A673 (cell line): ENCODE measurements at regions of chr11 and their contacts with region 1.

Region 1: DNA sequence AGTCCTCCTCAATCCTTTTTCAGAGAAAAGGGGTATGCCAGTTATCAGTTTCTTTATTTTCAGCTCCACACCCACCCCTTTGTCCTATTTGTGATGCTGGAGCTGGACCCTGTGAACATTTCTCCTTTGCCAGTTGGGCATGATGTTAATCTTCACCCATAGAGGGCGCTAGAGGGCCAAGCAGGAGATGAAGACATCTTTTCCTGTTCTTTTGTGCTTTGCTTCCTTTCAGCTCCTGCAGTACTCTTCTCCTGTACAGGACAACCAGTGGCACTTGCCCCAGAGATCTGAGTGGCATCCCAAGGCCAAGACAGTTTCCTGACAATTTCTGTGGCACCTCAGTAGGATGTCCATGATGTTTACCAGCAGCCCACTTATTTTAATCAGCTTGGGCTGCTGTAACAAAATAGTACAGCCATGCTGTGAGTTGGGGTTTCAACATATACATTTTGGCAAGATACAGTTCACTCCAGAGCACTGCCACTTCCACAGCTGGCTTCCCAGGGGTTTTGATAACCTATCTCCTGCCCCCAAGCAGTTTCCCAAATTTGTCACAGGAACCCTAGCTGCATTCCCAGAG is 4.6 kb downstream of the SAA2 start:
- DNase-seq: peak; percentile 75
- H3K4me3 ChIP-seq: no peak overlapping the region
- H3K27ac ChIP-seq: no peak overlapping the region
- H3K4me1 ChIP-seq: no peaks in the 10 kb centered on the region
- H3K27me3 ChIP-seq: peaks cover 8% of the 10 kb centered on the region
- CTCF ChIP-seq: peak; percentile 81

Region 2: GRCh38 chr11:17046690-17047089 is 1197.2 kb before region 1 on chr11:
- CTCF ChIA-PET with region 1: no interaction called
- POLR2A ChIA-PET with region 1: no interaction called
- intact Hi-C with region 1: no loop called
- DNase-seq: no peak
- H3K4me3 ChIP-seq: no peak overlapping the region
- H3K27ac ChIP-seq: no peak overlapping the region
- H3K4me1 ChIP-seq: no peaks in the 10 kb centered on the region
- H3K27me3 ChIP-seq: no peaks in the 10 kb centered on the region
- CTCF ChIP-seq: no peak

Region 3: GRCh38 chr11:18650859-18651557 is 407.1 kb after region 1 on chr11:
- CTCF ChIA-PET with region 1: interaction called, 8 read pairs
- POLR2A ChIA-PET with region 1: no interaction called
- intact Hi-C with region 1: loop called (anchors 2 kb)
- DNase-seq: peak; percentile 80
- H3K4me3 ChIP-seq: no peak overlapping the region
- H3K27ac ChIP-seq: no peak overlapping the region
- H3K4me1 ChIP-seq: no peaks in the 10 kb centered on the region
- H3K27me3 ChIP-seq: no peaks in the 10 kb centered on the region
- CTCF ChIP-seq: peak; percentile 67

Region 4: GRCh38 chr11:18731949-18732821 is 488.3 kb after region 1 on chr11:
- CTCF ChIA-PET with region 1: interaction called, 3 read pairs
- POLR2A ChIA-PET with region 1: no interaction called
- intact Hi-C with region 1: loop called (anchors 10 kb)
- DNase-seq: peak; percentile 52
- H3K4me3 ChIP-seq: no peak overlapping the region
- H3K27ac ChIP-seq: no peak overlapping the region
- H3K4me1 ChIP-seq: no peaks in the 10 kb centered on the region
- H3K27me3 ChIP-seq: no peaks in the 10 kb centered on the region
- CTCF ChIP-seq: peak; percentile 88